Stomach (tissue), 19 donors: ENCODE measurements at regions of chr11 and their contacts with region 1.

Region 1: DNA sequence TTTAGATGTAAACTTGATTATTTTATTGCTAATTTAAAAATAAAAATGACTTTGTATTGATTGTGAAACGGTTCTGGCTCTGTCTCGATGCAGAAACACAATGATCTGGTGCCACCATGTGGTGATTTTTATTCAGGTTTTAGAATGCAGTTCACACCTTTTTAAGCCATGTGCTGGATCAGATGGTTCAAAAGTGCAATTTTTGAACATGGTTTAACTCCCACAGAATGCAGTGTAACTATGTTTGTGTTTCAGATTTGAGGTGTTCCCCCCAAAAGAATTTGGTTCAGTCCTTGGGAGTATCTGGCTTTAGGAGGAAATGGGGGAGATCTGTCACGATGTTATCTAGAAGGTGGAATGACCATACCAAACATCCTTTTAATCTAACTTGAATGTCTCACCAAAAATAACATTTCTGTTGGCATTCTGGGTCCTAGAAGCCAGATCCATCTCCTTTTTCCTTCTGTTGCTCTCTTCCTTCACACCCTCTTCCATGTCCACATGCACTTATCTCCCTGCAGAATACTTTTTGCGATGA is 7.9 kb downstream of the MRPL16 start:
- DNase-seq: peak in 1 of 2 donors; percentile 87
- H3K4me3 ChIP-seq: no peak overlapping the region
- H3K27ac ChIP-seq: peak overlapping the region in 1 of 5 donors; percentile 5
- H3K4me1 ChIP-seq: peaks cover 0 to 15% (median 5%) of the 10 kb centered on the region in 4 donors
- H3K27me3 ChIP-seq: no peaks in the 10 kb centered on the region
- CTCF ChIP-seq: peak in 4 of 7 experiments; percentile 52 to 71 (median 55)
- EP300 ChIP-seq: no peak
- POLR2A ChIP-seq: no peak

Region 2: DNA sequence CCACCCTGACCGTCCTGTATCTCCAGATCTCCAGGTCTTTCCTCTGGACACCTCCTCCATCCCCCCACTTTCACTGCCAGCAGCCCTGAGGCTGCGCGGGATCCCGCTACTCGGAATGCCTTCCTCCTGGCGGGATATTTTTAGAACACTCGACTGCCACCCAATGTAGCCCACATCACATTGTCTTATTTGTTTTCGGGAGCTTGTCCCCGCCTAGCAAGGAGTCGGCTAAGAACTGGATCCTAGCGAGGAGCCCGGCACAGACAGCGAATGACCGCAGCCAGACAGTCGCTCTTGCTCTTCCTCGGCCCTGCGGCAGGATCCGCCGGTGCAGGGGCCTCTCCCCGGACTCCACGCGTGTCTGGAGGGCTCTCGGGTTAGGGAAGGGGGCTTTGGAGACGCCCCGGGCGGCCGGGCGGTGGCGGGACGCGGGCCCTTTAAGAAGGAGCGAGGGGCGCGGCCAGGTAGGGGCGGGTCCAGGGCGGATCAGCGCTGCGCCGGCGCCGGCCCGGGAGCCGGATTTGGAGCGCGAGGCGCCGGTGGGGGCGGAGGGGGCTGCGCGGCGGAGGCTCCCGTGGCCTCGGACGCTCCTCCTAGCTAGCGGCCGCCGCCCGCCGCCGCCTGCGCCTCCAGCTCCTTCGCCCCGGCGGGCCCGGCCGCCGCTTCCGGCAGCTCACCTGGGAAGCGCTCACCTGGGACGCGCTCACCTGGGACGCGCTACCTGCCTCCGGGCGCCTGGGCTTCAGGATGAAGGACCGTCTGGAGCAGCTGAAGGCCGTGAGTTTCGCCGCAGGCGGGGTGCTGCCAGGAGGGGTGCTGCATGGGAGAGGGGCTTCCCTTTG is 47.6 kb before region 1 on chr11 and contains the start of gene STX3:
- intact Hi-C with region 1: loop called (anchors 5 kb)
- DNase-seq: peak; percentile 87 to 92
- H3K4me3 ChIP-seq: peak within 1 kb of the TSS; percentile 73 to 89 (median 83)
- H3K27ac ChIP-seq: peak within 1 kb of the TSS; percentile 92 to 97 (median 95)
- H3K4me1 ChIP-seq: peaks cover 17 to 59% (median 51%) of the 10 kb centered on the region in 4 donors
- H3K27me3 ChIP-seq: no peaks in the 10 kb centered on the region
- CTCF ChIP-seq: no peak
- EP300 ChIP-seq: no peak
- POLR2A ChIP-seq: no peak
- total RNA-seq, gene STX3: 56.2 to 267 (median 67.2) TPM

Region 3: DNA sequence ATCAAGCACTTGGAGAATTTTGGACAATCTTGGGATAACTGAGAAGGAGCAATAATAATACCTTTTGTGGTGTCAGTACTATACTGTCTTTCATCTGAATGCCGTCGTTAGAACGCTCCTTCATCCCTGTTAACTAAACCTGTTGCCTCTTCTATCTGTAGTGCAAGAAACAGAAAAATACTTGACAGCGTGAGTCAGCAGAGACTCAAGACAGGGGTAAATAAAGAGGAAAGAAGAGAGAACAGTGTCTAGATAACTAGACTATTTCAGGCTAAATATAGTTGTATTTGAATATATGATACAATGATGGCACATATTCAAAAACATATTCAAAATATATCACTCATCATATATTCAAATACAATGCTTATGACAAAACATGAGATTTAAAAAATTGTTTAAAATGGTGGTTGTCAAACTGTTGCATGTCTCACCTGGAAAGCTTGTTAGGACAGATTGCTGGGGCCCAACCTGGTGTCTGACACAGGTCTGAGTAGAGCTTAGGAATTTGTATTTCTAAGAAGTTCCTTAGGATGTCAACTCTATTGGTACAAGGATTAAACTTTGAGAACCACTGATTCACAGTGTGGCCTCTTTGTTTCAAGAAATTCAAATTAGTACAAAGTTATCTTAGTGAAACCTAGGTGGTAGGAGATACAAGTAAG is 178.5 kb after region 1 on chr11:
- intact Hi-C with region 1: no loop called
- DNase-seq: no peak
- H3K4me3 ChIP-seq: no peak overlapping the region
- H3K27ac ChIP-seq: no peak overlapping the region
- H3K4me1 ChIP-seq: no peaks in the 10 kb centered on the region
- H3K27me3 ChIP-seq: no peaks in the 10 kb centered on the region
- CTCF ChIP-seq: no peak
- EP300 ChIP-seq: no peak
- POLR2A ChIP-seq: no peak

Region 4: GRCh38 chr11:60005360-60005759 is 202.7 kb after region 1 on chr11:
- intact Hi-C with region 1: no loop called
- DNase-seq: no peak
- H3K4me3 ChIP-seq: no peak overlapping the region
- H3K27ac ChIP-seq: no peak overlapping the region
- H3K4me1 ChIP-seq: no peaks in the 10 kb centered on the region
- H3K27me3 ChIP-seq: no peaks in the 10 kb centered on the region
- CTCF ChIP-seq: no peak
- EP300 ChIP-seq: no peak
- POLR2A ChIP-seq: no peak

Region 5: GRCh38 chr11:60204922-60205321 is 402.2 kb after region 1 on chr11:
- intact Hi-C with region 1: no loop called
- DNase-seq: no peak
- H3K4me3 ChIP-seq: no peak overlapping the region
- H3K27ac ChIP-seq: no peak overlapping the region
- H3K4me1 ChIP-seq: no peaks in the 10 kb centered on the region
- H3K27me3 ChIP-seq: no peaks in the 10 kb centered on the region
- CTCF ChIP-seq: no peak
- EP300 ChIP-seq: no peak
- POLR2A ChIP-seq: no peak